Lower leg skin (tissue), 4 donors: ENCODE measurements at regions of chr2 and their contacts with region 1.

Region 1: GRCh38 chr2:144516981-144517865 is 2.7 kb downstream of the ZEB2 start:
- DNase-seq: peak in 1 of 2 donors; percentile 92
- H3K4me3 ChIP-seq: peak overlapping the region; percentile 73
- CTCF ChIP-seq: no peak
- POLR2A ChIP-seq: no peak

Region 2: DNA sequence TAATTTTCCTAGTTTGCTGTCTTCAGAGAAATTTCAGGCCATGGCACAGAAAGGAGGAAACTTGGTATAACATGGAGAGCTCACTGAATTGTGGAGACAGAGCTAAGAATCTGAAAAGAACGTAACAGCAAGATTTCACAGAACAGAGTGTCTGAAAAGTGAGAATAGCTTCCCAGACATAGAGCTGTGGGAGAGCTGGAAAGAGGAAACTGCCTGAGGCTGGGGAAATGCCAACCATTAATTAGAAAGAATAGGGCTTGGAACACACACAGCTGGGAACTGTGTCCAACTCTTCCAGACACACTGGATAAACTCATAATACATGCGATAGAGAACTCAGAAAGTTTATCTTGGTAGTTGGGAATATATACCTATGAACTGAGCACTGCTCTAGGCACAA is 1691.4 kb before region 1 on chr2:
- intact Hi-C with region 1: no loop called
- DNase-seq: no peak
- H3K4me3 ChIP-seq: no peak overlapping the region
- CTCF ChIP-seq: no peak
- POLR2A ChIP-seq: no peak

Region 3: GRCh38 chr2:143954186-143954585 is 563.0 kb before region 1 on chr2:
- intact Hi-C with region 1: loop called (anchors 5 kb)
- DNase-seq: no peak
- H3K4me3 ChIP-seq: no peak overlapping the region
- CTCF ChIP-seq: no peak
- POLR2A ChIP-seq: no peak

Region 4: GRCh38 chr2:144332356-144333142 is 184.7 kb before region 1 on chr2:
- intact Hi-C with region 1: loop called (anchors 10 kb)
- DNase-seq: peak; percentile 67 to 96
- H3K4me3 ChIP-seq: peak overlapping the region; percentile 82
- CTCF ChIP-seq: no peak
- POLR2A ChIP-seq: no peak

Region 5: DNA sequence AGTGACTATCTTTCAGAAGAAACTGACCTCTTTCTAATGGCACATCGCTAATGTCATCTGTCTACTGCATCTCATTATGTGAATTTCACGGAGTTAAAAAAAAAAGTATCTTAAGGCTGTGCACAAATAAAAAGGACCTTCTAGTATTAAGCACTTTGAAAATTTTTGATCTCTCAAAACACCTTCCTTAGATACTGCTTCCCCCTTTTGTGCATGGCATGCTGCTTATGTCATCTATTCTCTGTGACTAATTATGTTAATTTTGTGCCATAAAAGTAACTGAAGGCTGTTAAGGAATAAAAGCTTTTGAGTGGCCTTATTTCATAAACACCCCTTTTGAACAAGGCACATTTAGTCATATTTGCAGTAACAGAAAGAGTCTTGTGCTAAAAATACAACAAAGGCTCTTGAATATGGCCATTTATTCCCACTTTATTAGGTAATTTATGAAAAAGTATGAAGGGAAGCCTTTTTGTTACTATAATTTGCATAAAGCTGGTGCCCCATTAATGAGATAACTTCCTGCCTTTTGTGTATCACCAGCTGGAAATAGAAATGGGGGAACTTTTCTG is 1414.6 kb after region 1 on chr2:
- intact Hi-C with region 1: no loop called
- DNase-seq: no peak
- H3K4me3 ChIP-seq: no peak overlapping the region
- CTCF ChIP-seq: no peak
- POLR2A ChIP-seq: no peak